ENCODE measurements at regions of chr19 and their contacts with region 1.

Region 1: DNA sequence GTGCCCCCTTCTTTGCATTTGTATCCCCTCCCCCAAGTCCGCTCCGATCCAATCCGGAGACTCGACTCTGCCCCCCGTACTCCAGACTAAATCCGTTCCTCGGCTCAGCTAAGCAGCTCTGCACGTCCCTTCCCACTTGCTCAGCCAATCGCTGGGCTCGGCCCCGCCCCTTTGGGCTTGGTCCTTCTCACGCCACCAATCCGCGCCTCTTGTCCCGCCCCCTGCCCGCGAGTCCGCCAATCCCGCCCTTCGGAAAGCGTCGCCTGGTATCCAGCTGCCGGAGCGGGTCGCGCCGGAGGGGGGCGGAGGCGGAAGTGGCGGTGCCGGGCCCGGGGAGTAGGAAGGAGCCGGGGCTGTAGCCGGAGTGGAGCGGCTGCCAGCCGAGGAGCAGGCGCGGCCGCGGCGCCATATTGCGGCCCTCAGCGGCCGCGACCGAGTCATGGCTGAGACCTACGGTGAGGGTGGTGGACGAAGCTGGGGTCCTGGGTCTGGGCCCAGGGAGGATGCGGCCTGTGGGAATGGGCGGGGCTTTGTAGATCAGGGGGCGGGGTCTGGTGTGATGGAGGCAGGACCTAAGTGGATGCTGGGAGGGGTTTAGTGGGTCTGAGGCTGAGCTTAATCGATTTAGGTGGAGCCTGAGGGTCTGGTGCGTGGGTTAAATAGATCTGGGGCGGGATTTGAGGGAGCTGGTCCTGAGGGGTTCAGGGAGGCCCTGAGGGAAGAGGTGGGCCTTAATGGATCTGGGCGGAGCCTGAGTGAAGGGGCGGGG is at the start of gene RAB4B:
- DNase-seq: peak; percentile 100
- ATAC-seq: peak; percentile 77
- H3K4me3 Mint-ChIP-seq: peak within 1 kb of the TSS; percentile 92
- H3K27ac Mint-ChIP-seq: peak within 1 kb of the TSS; percentile 96
- H3K4me1 Mint-ChIP-seq: peaks cover 50% of the 10 kb centered on the region
- H3K27me3 Mint-ChIP-seq: no peaks in the 10 kb centered on the region
- CTCF ChIP-seq: no peak
- total RNA-seq, gene RAB4B: 39.7 to 42.3 TPM

Region 2: DNA sequence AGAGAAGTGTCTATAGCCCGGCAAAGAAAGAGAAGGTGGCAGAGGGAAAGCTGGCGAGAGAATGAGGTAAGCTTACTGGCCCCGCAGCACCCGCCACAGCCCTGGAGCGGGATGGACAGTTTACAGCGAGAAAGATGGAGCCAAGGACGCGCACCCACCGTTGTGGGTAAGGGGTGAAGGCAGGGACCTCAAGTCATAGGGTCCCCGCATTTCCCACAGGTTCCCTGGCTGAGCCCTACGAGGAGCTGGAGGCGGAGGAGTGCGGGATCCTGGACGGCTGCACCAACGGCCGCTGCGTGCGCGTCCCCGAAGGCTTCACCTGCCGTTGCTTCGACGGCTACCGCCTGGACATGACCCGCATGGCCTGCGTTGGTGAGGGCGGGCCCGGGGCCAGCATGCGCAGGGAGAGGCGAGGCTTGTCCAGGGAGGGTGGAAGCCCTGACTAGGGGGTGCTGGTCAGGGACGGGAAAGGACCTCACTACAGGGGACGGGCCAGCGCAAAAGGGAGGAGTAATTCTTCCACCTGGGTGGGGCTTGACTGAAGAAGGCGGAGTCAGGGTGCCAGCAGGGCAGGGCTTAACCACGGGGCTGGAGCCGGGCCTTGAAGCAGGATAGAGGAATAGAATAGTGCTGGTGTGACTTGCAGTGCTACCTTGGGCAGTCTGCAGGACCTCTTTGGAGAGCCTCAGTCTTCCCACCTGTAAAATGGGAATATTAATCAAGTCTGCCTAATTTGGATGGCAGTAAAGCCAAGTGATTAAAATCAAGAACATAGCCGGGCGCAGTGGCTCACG is 150.4 kb before region 1 on chr19:
- CTCF ChIA-PET with region 1: no interaction called
- POLR2A ChIA-PET with region 1: no interaction called
- intact Hi-C with region 1: no loop called
- DNase-seq: no peak
- ATAC-seq: no peak
- H3K4me3 Mint-ChIP-seq: no peak overlapping the region
- H3K27ac Mint-ChIP-seq: no peak overlapping the region
- H3K4me1 Mint-ChIP-seq: peaks cover 16% of the 10 kb centered on the region
- H3K27me3 Mint-ChIP-seq: no peaks in the 10 kb centered on the region
- CTCF ChIP-seq: no peak

Region 3: GRCh38 chr19:40750059-40750873 is 27.9 kb before region 1 on chr19 and contains the start of gene ACTMAP:
- CTCF ChIA-PET with region 1: interaction called, 13 read pairs
- POLR2A ChIA-PET with region 1: interaction called, 22 read pairs
- intact Hi-C with region 1: no loop called
- DNase-seq: peak; percentile 100
- ATAC-seq: peak; percentile 90
- H3K4me3 Mint-ChIP-seq: peak within 1 kb of the TSS; percentile 94
- H3K27ac Mint-ChIP-seq: peak within 1 kb of the TSS; percentile 99
- H3K4me1 Mint-ChIP-seq: peaks cover 27% of the 10 kb centered on the region
- H3K27me3 Mint-ChIP-seq: no peaks in the 10 kb centered on the region
- CTCF ChIP-seq: no peak
- total RNA-seq, gene ACTMAP: 12.8 to 14.2 TPM

Region 4: DNA sequence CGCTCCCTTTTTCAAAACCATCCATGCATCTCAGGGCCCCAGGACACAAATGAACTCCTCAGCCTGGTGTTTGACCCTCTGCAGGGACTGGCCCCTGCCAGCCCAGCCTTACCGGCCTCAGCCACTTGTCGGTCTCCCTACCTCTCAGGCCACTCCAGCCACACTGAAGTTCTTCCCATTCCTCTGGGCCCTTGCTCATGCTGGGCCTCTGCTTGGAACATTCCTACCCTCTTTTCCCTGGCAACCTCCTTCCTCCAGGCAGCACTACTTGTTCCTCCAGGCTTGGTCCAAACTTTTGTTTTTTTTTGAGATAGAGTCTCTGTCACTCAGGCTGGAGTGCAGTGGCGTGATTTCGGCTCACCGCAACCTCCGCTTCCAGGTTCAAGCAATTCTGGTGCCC is 13.2 kb after region 1 on chr19:
- CTCF ChIA-PET with region 1: interaction called, 5 read pairs
- POLR2A ChIA-PET with region 1: interaction called, 15 read pairs
- intact Hi-C with region 1: loop called (anchors 2 kb)
- DNase-seq: no peak
- ATAC-seq: no peak
- H3K4me3 Mint-ChIP-seq: no peak overlapping the region
- H3K27ac Mint-ChIP-seq: peak overlapping the region; percentile 68
- H3K4me1 Mint-ChIP-seq: peaks cover 28% of the 10 kb centered on the region
- H3K27me3 Mint-ChIP-seq: no peaks in the 10 kb centered on the region
- CTCF ChIP-seq: no peak

Region 5: GRCh38 chr19:40806488-40807468 is 28.7 kb after region 1 on chr19:
- CTCF ChIA-PET with region 1: interaction called, 32 read pairs
- POLR2A ChIA-PET with region 1: interaction called, 5 read pairs
- intact Hi-C with region 1: no loop called
- DNase-seq: peak; percentile 90
- ATAC-seq: peak; percentile 49
- H3K4me3 Mint-ChIP-seq: peak overlapping the region; percentile 54
- H3K27ac Mint-ChIP-seq: peak overlapping the region; percentile 88
- H3K4me1 Mint-ChIP-seq: peaks cover 74% of the 10 kb centered on the region
- H3K27me3 Mint-ChIP-seq: no peaks in the 10 kb centered on the region
- CTCF ChIP-seq: peak; percentile 93

Region 6: DNA sequence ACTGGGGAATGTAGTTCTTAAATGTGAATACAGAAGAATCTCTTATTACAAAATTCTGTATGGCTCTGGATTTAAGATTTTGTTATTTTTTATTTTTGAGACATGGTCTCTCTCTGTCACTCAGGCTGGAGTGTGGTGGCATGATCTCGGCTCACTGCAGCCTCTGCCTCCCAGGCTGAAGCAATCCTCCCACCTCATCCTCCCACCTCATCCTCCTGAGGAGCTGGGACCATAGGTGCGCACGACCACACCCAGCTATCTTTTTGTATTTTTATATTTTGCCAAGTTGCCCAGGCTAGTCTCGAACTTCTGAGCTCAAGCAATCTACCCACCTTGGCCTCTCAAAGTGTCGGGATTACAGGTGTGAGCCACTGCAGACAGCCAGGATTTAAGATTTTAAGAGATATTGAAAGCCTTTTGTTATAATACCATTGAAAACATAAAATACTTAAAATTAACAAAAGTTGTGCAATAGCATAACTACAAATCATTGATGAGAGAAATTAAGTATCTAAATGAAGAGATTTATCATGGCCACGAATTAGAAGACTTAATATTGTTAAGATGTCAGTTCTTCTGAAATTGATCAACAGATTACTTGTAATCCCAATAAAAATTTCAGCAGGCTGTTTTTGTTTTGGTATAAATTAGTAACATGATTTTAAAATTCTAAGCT is 58.8 kb after region 1 on chr19:
- CTCF ChIA-PET with region 1: no interaction called
- POLR2A ChIA-PET with region 1: no interaction called
- intact Hi-C with region 1: no loop called
- DNase-seq: no peak
- ATAC-seq: no peak
- H3K4me3 Mint-ChIP-seq: no peak overlapping the region
- H3K27ac Mint-ChIP-seq: no peak overlapping the region
- H3K4me1 Mint-ChIP-seq: peaks cover 15% of the 10 kb centered on the region
- H3K27me3 Mint-ChIP-seq: no peaks in the 10 kb centered on the region
- CTCF ChIP-seq: no peak

Measured in activated CD8-positive, alpha-beta T cell treated with anti-CD3 and anti-CD28 coated beads for 36 hours (primary cell).